AG04449 (cell line): ENCODE measurements at regions of chr5 and their contacts with region 1.

Region 1: DNA sequence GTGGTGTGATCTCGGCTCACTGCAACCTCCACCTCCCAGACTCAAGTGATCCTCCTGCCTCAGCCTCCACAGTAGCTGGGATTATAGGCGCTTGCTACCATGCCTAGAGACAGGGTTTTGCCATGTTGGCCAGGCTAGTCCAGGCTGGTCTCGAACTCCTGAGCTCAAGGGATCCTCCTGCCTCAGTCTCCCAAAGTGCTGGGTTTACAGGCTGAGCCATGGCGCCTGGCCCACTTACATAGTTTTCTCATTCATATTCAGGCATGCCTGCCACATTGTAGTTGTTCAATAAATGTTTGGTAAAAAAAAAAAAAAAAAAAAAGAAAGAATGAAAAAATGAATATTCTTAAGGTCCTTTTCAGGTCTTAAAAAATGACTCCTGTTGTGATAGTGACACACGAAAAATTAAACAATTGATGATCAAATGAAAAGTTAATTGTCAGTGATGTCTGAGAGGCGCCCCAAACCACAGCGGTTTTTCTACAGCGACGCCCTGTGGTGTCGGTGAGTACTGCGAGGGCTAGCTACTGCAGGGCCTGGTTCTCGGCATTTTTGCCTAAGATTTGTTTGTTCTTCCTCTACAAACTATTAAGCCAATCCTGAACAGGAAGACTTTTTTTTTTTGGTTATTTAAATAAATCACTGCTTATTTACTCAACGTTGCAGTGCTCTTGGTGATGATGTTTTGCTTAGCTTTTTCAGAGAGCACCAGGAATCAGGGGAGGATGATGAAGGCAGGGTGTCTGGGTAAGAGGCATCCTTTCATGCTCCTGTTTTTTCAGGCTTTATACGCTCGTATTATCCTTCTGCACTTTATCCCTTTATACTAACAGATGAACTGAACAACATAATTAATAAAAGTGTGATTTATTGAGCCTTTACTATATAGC is 67.0 kb upstream of the DPYSL3 start:
- DNase-seq: no peak
- H3K4me3 ChIP-seq: no peak overlapping the region
- CTCF ChIP-seq: peak; percentile 81

Region 2: DNA sequence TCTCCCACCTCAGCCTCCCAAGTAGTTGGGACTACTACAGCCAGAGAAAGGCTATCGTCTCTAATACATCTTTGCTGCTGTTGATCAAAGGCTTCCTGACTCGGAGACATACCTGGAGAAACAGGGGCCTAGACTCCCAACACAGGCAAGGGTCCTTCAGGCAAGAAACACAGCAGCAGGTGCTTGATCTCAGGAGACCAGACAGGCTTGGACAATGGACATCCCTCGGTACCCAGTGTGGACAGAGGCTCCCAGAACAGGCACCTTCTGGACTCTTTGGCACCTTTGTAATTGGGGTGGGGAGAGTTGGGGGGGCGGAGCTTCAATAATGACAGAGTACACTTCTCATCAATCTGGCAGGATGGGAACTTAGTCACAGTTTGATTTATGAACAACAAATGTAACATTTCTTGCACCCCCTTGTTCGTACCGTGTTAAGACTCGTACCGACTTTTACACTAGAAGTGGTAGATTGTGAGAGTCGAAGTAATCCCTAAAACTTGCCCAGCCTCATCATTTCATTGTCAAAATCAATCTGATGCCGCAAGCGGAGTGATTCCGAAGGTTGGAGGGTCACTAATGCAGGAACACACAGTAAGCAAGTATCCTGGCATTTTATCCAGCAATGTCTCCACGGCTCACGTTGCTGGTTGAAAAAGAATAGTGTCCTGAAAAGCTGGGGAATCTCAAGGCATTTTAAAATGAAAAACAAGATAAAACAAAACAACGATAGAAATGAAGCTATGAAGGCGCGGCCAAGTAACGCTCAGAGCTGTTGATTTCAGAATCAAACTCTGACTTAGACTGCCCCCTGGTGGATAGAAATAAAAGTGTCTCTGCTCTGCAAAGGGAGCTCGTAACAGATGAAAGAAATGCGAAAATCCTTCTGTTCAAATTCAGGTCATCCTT is 388.4 kb before region 1 on chr5:
- CTCF ChIA-PET with region 1: interaction called, 18 read pairs
- POLR2A ChIA-PET with region 1: no interaction called
- DNase-seq: no peak
- H3K4me3 ChIP-seq: no peak overlapping the region
- CTCF ChIP-seq: peak; percentile 57

Region 3: DNA sequence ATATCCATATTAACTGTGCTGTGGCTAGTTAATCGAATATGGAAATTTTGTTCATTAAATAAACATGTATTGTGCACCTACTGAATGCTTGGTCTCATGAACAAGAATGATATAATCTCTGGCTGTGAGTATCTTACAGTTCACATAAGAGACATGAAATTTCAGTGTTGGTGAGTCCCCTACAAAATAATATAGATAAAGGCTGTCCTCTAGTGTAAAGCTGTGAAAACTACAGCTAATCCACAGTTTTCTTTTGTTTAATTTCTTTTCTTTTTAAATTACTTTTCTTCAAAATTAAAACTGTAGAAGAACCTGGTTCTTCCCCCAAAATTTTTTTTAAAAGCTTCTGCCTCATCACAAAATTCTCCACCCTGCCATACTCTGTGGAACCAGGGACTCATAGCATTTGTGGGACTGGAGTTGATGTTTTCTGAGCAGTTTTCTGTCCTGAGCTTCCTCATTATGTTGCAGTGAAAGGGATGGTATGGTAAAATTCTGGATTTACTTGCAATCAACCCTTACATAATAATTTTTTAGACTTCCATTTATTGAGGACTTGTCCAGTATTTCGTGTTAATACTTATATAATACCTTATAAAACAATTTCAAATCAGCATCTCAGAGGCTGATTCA is 207.0 kb before region 1 on chr5:
- CTCF ChIA-PET with region 1: interaction called, 25 read pairs
- POLR2A ChIA-PET with region 1: no interaction called
- DNase-seq: no peak
- H3K4me3 ChIP-seq: no peak overlapping the region
- CTCF ChIP-seq: peak; percentile 22

Region 4: GRCh38 chr5:147403651-147404640 is 172.9 kb before region 1 on chr5:
- CTCF ChIA-PET with region 1: interaction called, 13 read pairs
- POLR2A ChIA-PET with region 1: no interaction called
- DNase-seq: peak; percentile 97
- H3K4me3 ChIP-seq: no peak overlapping the region
- CTCF ChIP-seq: no peak

Region 5: GRCh38 chr5:147464211-147464610 is 112.7 kb before region 1 on chr5:
- CTCF ChIA-PET with region 1: interaction called, 17 read pairs
- POLR2A ChIA-PET with region 1: no interaction called
- DNase-seq: no peak
- H3K4me3 ChIP-seq: no peak overlapping the region
- CTCF ChIP-seq: peak; percentile 37

Region 6: DNA sequence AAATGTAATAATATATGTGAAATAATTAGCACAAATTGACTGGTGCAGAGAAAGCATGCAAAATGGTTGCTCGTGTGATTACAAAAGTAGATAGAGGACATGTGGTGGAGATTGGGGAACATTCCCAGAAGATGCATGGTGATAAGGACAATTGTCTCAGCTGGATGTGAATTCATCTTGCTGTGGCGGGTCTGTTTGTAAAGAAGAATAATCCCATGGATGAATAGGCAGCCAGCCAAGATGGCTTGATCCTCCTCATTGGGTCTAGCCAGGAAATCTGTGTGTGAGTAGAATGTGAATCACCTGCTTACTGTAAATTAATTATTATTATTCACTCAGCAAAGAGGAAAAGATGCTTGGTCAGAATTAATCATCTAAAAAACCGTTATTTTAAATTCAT is 54.5 kb before region 1 on chr5:
- CTCF ChIA-PET with region 1: no interaction called
- POLR2A ChIA-PET with region 1: no interaction called
- DNase-seq: no peak
- H3K4me3 ChIP-seq: no peak overlapping the region
- CTCF ChIP-seq: no peak